IMR-90 (cell line): ENCODE measurements at regions of chr13 and their contacts with region 1.

Region 1: DNA sequence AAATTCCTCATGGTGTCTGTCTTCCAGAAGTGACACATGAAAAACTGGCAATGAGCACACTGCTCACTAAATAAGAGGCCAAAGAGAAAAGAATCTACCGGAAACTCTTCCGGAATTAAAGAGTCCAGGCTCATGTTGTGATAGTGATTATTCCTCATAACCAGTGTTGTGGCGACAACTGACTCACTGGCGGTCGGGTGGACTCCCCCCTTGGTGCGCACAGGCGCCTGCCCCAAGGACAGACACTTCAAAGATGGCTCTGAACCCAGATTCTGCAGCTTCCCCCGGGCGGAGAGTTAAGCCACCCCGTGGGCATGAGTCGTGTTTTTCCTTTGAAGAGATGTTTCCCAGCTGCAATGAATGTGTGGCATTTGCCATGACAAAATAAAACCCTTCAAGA is 10.3 kb downstream of the IL17D start:
- DNase-seq: peak; percentile 39
- ATAC-seq: no peak
- H3K4me3 ChIP-seq: no peak overlapping the region
- H3K27ac ChIP-seq: no peak overlapping the region
- H3K4me1 ChIP-seq: peaks cover 9% of the 10 kb centered on the region
- H3K27me3 ChIP-seq: peaks cover 1% of the 10 kb centered on the region; the same call in 1 of the 2 replicates
- CTCF ChIP-seq: no peak
- POLR2A ChIP-seq: no peak
- RAD21 ChIP-seq: no peak

Region 2: DNA sequence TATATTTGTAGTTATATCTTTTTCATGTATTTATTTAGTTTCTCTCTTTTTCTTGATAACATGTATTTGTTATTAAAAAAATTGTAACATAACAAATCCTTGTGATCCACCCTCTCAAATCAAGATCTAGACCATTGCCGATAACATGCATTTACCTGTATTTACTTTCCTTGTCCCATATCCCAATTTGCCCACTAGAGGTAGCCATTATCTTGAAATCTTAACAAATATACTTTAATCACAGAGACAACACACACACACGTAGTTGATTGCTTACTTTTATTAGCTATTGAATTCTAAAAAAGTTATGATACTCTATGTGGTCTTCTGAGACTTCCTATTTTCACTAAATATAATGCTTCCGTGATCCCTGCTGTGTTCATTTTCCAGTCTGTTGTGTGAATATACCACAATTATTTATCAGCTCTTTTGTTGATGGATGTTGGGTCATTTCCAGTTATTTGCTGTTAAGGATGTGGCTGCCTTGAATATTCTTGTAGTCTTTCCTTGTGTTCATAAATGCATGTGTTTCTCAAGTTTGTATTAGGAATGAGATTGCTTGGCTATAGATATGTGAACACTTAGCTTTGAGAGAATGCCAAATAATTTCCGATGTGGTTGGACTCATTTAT is 786.5 kb before region 1 on chr13:
- CTCF ChIA-PET with region 1: no interaction called
- POLR2A ChIA-PET with region 1: no interaction called
- dilution Hi-C with region 1: no loop called
- in situ Hi-C with region 1: no loop called
- intact Hi-C with region 1: no loop called
- DNase-seq: peak; percentile 31
- ATAC-seq: peak; percentile 32; the same call in 1 of the 2 replicates
- H3K4me3 ChIP-seq: no peak overlapping the region
- H3K27ac ChIP-seq: no peak overlapping the region
- H3K4me1 ChIP-seq: no peaks in the 10 kb centered on the region
- H3K27me3 ChIP-seq: no peaks in the 10 kb centered on the region
- CTCF ChIP-seq: peak; percentile 49
- POLR2A ChIP-seq: no peak
- RAD21 ChIP-seq: peak; percentile 44

Region 3: DNA sequence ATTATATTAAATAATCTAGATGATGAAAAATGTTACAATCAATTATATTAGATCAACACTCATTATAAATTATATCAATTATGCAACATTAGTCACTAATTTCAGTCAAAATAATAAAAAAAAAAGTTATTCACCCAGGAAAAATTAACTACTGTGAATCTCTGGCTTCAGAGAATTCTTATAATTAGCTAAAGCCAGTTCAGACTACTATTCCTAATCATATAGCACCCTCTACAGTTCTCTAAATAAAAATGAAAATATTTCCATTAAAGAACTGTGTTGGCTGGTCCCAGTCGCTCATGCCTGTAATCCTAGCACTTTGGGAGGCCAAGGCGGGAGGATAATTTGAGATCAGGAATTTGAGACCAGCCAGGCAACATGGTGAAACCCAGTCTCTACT is 155.8 kb after region 1 on chr13:
- CTCF ChIA-PET with region 1: interaction called, 3 read pairs
- POLR2A ChIA-PET with region 1: no interaction called
- dilution Hi-C with region 1: no loop called
- in situ Hi-C with region 1: no loop called
- intact Hi-C with region 1: loop called (anchors 1 kb)
- DNase-seq: peak; percentile 11
- ATAC-seq: peak; percentile 35; the same call in 1 of the 2 replicates
- H3K4me3 ChIP-seq: no peak overlapping the region
- H3K27ac ChIP-seq: no peak overlapping the region
- H3K4me1 ChIP-seq: peaks cover 5% of the 10 kb centered on the region
- H3K27me3 ChIP-seq: no peaks in the 10 kb centered on the region
- CTCF ChIP-seq: peak; percentile 39
- POLR2A ChIP-seq: no peak
- RAD21 ChIP-seq: peak; percentile 49